ENCODE measurements at regions of chr2 and their contacts with region 1.

Region 1: GRCh38 chr2:62297624-62298010 is 101.7 kb downstream of the B3GNT2 start:
- DNase-seq: peak; percentile 60
- ATAC-seq: peak; percentile 39
- H3K4me3 Mint-ChIP-seq: no peak overlapping the region
- H3K27ac Mint-ChIP-seq: no peak overlapping the region
- H3K4me1 Mint-ChIP-seq: peaks cover 27% of the 10 kb centered on the region
- H3K27me3 Mint-ChIP-seq: no peaks in the 10 kb centered on the region
- CTCF ChIP-seq: no peak

Region 2: DNA sequence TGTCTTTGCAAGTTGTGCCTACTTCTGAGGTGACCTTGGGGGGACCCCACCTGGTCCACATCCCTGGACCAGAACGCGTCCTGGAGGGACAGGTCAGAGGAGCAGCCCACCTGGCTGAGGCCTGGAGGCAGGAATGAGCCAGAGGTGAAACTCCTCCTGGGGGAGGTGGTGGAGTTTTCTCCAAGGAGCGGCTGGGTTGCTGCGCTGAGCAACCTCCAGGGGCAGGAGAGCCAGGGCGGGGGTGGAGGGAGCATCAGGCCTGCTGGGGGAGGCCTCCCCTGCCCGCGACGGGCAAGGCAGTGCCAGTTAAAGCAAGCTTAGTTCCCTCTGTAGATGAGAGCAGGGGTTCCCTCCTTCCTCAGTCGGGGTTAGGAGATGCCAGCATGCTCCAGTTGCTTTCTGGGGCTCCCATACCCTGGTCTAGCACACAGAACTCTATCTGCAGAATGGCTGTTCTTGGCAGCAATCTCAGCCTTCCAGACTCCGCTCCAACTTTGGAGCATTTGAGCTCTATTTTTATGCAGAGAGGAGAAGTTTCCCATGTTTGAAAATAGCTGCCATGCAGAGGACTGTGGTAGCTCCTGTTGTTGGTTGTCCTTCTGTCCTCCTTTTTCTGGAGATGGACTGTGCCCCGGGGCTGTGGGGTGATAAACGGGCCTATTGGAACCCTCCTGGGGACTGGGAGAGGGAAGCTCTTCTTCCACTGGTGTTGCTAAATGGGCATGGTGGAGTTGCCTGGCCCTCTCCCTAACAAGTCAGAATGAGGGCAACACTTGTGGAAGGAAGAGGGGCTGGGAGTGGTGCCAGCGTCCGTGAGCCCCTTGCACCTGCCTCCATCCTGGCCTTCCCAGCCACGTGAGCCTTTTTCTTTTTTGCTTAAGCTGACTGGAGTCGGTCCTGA is 62.6 kb before region 1 on chr2:
- CTCF ChIA-PET with region 1: interaction called, 15 read pairs
- POLR2A ChIA-PET with region 1: no interaction called
- DNase-seq: no peak
- ATAC-seq: peak; percentile 76
- H3K4me3 Mint-ChIP-seq: no peak overlapping the region
- H3K27ac Mint-ChIP-seq: no peak overlapping the region
- H3K4me1 Mint-ChIP-seq: peaks cover 4% of the 10 kb centered on the region; the same call in 1 of the 2 replicates
- H3K27me3 Mint-ChIP-seq: no peaks in the 10 kb centered on the region
- CTCF ChIP-seq: no peak

Region 3: DNA sequence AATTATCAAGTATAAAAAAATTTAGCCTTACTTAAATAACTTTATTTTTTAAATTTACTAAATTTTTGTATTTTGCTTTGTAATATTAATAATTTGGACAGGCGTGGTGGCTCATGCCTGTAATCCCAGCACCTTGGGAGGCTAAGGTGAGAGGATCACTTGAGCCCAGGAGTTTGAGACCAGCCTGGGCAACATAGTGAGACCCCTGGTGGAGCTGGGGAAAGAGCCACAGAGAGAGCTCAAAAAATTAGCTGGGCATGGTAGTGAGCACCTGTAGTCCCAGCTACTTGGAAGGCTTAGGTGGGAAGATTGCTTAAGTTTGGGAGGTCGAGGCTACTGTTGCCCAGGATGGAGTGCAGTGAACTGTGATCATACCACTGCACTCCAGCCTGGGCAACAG is 41.8 kb after region 1 on chr2:
- CTCF ChIA-PET with region 1: no interaction called
- POLR2A ChIA-PET with region 1: no interaction called
- DNase-seq: no peak
- ATAC-seq: no peak
- H3K4me3 Mint-ChIP-seq: no peak overlapping the region
- H3K27ac Mint-ChIP-seq: no peak overlapping the region
- H3K4me1 Mint-ChIP-seq: peaks cover 37% of the 10 kb centered on the region
- H3K27me3 Mint-ChIP-seq: no peaks in the 10 kb centered on the region
- CTCF ChIP-seq: no peak